Naive thymus-derived CD8-positive, alpha-beta T cell (primary cell): ENCODE measurements at regions of chr17 and their contacts with region 1.

Region 1: DNA sequence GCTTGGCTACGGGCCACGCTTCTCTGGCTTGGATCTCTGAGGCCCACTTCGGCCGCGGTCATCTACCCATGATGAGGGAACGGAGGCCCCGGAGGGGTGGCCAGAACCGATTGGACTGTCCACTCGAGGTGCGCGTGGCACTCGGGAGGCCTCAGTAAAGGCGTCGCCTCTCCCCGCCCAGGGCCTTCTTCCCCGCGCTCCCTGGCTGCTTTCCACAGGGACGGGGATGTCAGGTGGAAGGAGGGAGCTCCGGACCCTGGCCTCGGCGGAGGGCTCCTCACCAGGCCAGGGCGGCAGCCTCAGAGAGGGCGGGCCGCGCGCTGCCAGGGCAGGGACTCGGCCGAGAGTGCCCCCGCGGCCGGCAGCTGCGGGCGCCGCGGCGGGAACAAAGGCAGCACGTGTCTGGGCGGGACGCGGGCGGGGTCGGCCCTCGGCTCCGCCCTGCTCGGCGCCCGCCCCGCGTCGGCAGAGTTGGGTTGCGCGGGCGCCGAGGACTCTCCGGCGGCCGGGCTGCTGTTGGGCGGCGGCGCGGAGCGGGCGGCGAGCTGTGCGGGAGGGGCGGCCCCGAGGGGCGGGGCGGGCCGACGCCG is 587 bp upstream of the CDK5R1 start:
- DNase-seq: peak in 9 of 10 donors; percentile 53 to 79 (median 73)
- ATAC-seq: peak; percentile 73 to 80
- H3K4me3 Mint-ChIP-seq: peak overlapping the region; percentile 62 to 84 (median 80)
- H3K27ac Mint-ChIP-seq: peak overlapping the region in 9 of 10 donors; percentile 63 to 87 (median 80)
- H3K4me1 Mint-ChIP-seq: peaks cover 19 to 53% (median 47%) of the 10 kb centered on the region in 4 donors
- H3K27me3 Mint-ChIP-seq: no peaks in the 10 kb centered on the region

Region 2: DNA sequence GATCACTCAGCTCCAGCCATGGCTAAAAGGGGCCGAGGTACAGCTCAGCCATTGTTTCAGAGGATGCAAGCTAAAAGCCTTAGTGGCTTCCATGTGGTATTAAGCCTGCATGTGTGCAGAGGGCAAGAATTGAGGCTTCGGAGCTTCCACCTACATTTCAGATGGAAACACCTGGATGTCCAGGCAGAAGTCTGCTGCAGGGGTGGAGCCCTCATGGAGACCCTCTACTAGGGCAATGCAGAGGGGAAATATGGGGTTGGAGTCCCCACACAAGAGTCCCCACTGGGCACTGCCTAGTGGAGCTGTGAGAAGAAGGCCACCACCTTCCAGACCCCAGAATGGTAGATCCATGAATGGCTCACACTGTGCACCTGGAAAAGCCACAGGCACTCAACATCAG is 56.6 kb before region 1 on chr17:
- POLR2A ChIA-PET with region 1: no interaction called
- DNase-seq: no peak
- ATAC-seq: no peak
- H3K4me3 Mint-ChIP-seq: no peak overlapping the region
- H3K27ac Mint-ChIP-seq: no peak overlapping the region
- H3K4me1 Mint-ChIP-seq: no peaks in the 10 kb centered on the region
- H3K27me3 Mint-ChIP-seq: no peaks in the 10 kb centered on the region

Region 3: GRCh38 chr17:32444308-32445073 is 41.7 kb before region 1 on chr17 and contains the start of gene PSMD11:
- POLR2A ChIA-PET with region 1: interaction called, 12 read pairs
- DNase-seq: peak; percentile 98 to 100 (median 99)
- ATAC-seq: peak; percentile 95 to 97
- H3K4me3 Mint-ChIP-seq: peak within 1 kb of the TSS; percentile 77 to 97 (median 89)
- H3K27ac Mint-ChIP-seq: peak within 1 kb of the TSS; percentile 23 to 94 (median 89)
- H3K4me1 Mint-ChIP-seq: peaks cover 7 to 39% (median 37%) of the 10 kb centered on the region in 4 donors
- H3K27me3 Mint-ChIP-seq: no peaks in the 10 kb centered on the region
- polyA plus RNA-seq, gene PSMD11: 102 to 122 (median 112) TPM

Region 4: DNA sequence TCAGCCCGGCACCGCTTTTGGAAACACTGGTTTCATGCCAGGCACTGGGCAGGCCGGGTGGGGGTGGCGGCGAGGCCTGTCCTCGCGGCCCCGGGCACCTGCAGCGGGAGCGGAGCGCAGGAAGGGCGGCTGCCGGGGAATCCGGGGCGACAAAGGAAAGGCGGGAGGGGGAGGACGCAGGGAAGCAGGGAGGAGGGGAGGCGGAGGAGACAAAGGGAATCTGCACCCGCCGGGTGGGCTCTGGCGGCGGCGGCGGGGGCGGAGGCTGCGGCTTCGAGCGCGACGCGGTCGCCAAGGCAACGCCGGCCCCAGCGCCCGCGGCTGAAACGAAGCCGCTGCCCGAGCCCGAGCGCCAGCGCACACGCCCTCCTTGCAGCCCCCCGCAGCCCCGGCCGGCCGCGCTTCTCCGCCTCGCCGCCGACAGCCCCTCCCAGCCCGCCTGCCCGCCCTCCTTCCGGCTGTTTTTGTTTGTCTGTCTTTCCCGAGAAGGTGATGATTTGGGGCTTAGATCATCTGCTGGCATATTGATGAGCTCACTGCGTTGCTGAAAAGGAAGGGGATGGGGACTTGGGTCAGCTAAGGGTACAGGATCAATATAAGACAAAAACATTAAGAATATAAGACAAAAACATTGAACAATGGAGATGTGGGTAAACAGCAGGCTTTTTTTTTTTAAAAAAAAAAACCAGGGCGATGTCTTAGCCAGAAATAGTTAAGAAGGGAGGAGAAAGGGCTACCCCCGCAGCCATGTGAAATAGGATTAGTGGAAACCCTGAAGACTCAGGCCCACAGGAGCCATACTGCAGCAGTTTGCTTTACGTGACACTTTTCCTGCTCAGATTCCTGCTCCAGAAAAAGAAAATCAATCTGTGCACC is 33.3 kb after region 1 on chr17:
- POLR2A ChIA-PET with region 1: interaction called, 889 read pairs
- DNase-seq: peak in 9 of 10 donors; percentile 37 to 72 (median 59)
- ATAC-seq: peak; percentile 37 to 59
- H3K4me3 Mint-ChIP-seq: peak overlapping the region; percentile 77 to 89 (median 87)
- H3K27ac Mint-ChIP-seq: peak overlapping the region; percentile 92 to 98 (median 95)
- H3K4me1 Mint-ChIP-seq: peaks cover 45 to 89% (median 85%) of the 10 kb centered on the region in 4 donors
- H3K27me3 Mint-ChIP-seq: no peaks in the 10 kb centered on the region